ENCODE measurements at regions of chr4 and their contacts with region 1.

Region 1: DNA sequence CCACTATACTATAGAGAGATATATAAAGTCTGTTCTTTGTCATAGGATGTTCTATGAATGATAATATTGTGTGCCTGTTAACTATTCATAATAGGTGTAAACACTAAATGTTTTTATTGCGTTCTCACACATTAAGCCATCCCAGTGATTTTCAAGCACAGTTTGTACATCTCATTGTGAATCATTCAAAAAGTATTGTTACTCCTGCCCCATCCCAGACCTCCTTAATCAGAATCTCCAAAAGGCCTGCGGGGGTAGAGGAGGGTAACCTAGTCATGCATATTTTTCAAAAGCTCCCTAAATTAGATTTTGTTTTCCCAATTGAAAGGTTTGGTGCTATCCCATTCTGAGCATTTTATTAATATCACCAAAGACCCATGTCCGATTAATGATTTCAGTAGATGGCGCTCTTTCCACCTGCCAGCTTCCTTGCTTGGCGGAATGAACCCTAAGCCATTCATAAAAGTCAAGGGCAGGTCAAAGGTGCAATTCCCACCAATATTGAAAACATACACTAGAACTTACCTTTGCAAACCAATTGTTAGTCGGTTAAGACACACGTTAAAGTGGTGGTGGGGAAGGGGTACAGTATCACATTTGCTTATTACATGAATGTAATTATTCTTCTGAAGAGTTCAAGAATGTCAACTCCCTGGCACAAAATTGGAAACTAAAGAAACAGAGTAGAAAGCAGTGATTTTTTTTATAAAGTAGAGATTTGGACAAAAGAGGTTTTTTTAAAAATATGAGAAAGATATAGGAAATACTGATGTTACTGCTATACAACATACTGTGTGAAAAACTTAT is 5.8 kb upstream of the TET2 start:
- DNase-seq: peak in 1 of 2 experiments; percentile 49
- H3K4me3 ChIP-seq: no peak overlapping the region
- H3K4me3 Mint-ChIP-seq: no peak overlapping the region
- H3K27ac Mint-ChIP-seq: no peak overlapping the region
- H3K4me1 ChIP-seq: peaks cover under 1% of the 10 kb centered on the region; the same call in 1 of the 2 replicates
- H3K4me1 Mint-ChIP-seq: no peaks in the 10 kb centered on the region
- H3K27me3 ChIP-seq: no peaks in the 10 kb centered on the region
- H3K27me3 Mint-ChIP-seq: peaks cover 2% of the 10 kb centered on the region
- CTCF ChIP-seq: peak; percentile 51 to 54

Region 2: GRCh38 chr4:105119356-105119755 is 21.5 kb before region 1 on chr4:
- CTCF ChIA-PET with region 1: no interaction called
- POLR2A ChIA-PET with region 1: no interaction called
- intact Hi-C with region 1: loop called (anchors 2 kb)
- DNase-seq: peak in 1 of 2 experiments; percentile 41
- H3K4me3 ChIP-seq: no peak overlapping the region
- H3K4me3 Mint-ChIP-seq: no peak overlapping the region
- H3K27ac Mint-ChIP-seq: peak overlapping the region; percentile 7
- H3K4me1 ChIP-seq: peaks cover 35% of the 10 kb centered on the region
- H3K4me1 Mint-ChIP-seq: peaks cover 27% of the 10 kb centered on the region
- H3K27me3 ChIP-seq: no peaks in the 10 kb centered on the region
- H3K27me3 Mint-ChIP-seq: no peaks in the 10 kb centered on the region
- CTCF ChIP-seq: no peak

Region 3: GRCh38 chr4:105257826-105258495 is 117.1 kb after region 1 on chr4:
- CTCF ChIA-PET with region 1: no interaction called
- POLR2A ChIA-PET with region 1: no interaction called
- intact Hi-C with region 1: loop called (anchors 1 kb)
- DNase-seq: no peak
- H3K4me3 ChIP-seq: no peak overlapping the region
- H3K4me3 Mint-ChIP-seq: no peak overlapping the region
- H3K27ac Mint-ChIP-seq: no peak overlapping the region
- H3K4me1 ChIP-seq: no peaks in the 10 kb centered on the region
- H3K4me1 Mint-ChIP-seq: no peaks in the 10 kb centered on the region
- H3K27me3 ChIP-seq: no peaks in the 10 kb centered on the region
- H3K27me3 Mint-ChIP-seq: no peaks in the 10 kb centered on the region
- CTCF ChIP-seq: peak in 1 of 2 experiments; percentile 30

Measured in Caco-2 (cell line).